ENCODE measurements at regions of chr1 and their contacts with region 1.

Region 1: DNA sequence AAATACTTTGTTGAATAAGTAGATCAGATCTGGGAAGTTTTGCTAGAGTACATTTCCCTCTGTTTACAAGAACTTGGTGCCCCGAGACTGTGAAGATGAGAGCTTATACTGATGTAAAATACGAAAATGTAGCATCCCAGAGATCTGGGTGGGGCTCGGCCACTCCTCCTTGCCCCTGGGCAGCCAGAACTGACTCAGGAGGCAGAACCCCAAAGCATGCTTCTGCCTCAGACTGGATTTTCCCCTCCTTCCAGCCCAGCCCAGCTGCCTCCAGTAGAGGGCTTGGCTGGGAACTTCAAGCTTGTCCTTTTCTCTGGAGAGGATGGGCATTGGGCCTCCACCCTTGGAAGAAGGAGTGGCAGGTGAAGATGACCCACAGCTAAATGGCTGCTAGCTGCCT is 24.3 kb upstream of the BTG2 start:
- DNase-seq: peak in 1 of 2 experiments; percentile 41
- H3K4me3 ChIP-seq: no peak overlapping the region
- H3K27ac ChIP-seq: no peak overlapping the region
- H3K4me1 ChIP-seq: no peaks in the 10 kb centered on the region
- H3K27me3 ChIP-seq: peaks cover 12% of the 10 kb centered on the region; the same call in 1 of the 2 replicates
- CTCF ChIP-seq: no peak; the same call in 1 of the 2 replicates

Region 2: DNA sequence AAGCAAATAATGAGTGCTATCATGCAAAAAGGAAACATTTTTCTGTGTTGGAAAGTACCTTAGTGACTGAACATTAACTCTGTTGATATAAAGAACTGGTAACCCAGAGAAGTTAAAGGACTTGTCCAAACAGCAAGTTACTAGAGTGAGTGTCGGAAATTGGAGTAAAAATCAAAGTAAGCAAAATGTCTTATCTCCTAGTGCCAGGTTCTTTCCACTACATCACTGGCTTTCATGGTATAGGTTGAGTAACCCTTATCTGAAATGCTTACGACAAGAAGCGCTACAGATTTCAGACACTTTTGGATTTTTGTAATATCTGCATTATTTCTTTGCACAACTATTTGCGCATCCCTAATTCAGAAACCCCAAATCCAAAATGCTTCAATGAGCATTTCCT is 375.7 kb before region 1 on chr1:
- CTCF ChIA-PET with region 1: no interaction called
- POLR2A ChIA-PET with region 1: interaction called, 49 read pairs
- intact Hi-C with region 1: no loop called
- DNase-seq: no peak
- H3K4me3 ChIP-seq: no peak overlapping the region
- H3K27ac ChIP-seq: no peak overlapping the region
- H3K4me1 ChIP-seq: no peaks in the 10 kb centered on the region
- H3K27me3 ChIP-seq: no peaks in the 10 kb centered on the region
- CTCF ChIP-seq: no peak

Region 3: GRCh38 chr1:203215573-203215972 is 65.4 kb before region 1 on chr1:
- CTCF ChIA-PET with region 1: no interaction called
- POLR2A ChIA-PET with region 1: no interaction called
- intact Hi-C with region 1: no loop called
- DNase-seq: no peak
- H3K4me3 ChIP-seq: no peak overlapping the region
- H3K27ac ChIP-seq: no peak overlapping the region
- H3K4me1 ChIP-seq: no peaks in the 10 kb centered on the region
- H3K27me3 ChIP-seq: peaks cover 17% of the 10 kb centered on the region; the same call in 1 of the 2 replicates
- CTCF ChIP-seq: no peak

Measured in PC-9 (cell line).